ENCODE measurements at regions of chr20 and their contacts with region 1.

Region 1: DNA sequence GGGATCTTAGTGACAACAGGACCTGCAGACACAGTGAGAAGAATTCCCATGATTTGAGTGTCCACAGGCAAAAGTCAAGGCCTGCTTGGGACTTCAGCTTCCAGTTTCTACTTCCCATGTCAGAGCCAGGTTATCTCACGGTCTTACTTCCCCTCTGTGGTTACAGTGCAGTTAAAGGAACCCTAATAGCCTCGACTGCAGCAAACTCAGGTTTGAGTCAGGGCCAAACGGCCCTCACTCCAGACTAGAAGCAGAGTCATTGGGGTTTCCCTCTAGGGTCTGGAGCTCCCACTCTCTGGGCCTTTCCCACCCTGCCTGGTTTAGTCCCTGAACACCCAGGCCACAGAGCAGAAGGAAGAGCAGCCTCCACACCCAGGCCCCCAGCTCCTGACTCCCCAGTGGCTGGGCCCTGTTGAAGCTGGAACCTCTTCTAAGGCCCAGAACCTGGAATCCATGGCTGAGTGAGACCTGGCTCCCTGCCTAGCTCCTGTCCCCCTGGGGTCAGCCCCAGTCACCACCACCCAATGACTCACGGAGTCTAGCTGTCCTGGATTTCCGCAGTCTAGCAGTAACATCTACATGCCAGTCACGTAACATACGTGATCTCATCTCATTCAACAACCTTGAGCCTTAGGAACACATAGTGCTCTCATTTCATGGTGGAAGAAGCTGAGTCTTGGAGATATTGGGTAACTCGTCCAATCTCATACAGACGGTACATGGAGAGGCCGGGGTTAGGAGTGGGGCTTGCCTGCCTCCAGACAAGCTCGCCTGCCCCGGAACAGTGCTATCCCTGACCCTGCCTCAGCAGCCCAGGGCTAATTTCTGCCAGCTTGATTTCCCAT is 9.2 kb upstream of the GHRH start:
- DNase-seq: no peak
- H3K4me3 ChIP-seq: no peak overlapping the region
- H3K27ac ChIP-seq: no peak overlapping the region
- H3K4me1 ChIP-seq: peaks cover 4 to 14% (median 11%) of the 10 kb centered on the region in 4 experiments
- H3K27me3 ChIP-seq: no peaks in the 10 kb centered on the region
- CTCF ChIP-seq: no peak
- EP300 ChIP-seq: no peak
- POLR2A ChIP-seq: no peak
- RAD21 ChIP-seq: no peak

Region 2: DNA sequence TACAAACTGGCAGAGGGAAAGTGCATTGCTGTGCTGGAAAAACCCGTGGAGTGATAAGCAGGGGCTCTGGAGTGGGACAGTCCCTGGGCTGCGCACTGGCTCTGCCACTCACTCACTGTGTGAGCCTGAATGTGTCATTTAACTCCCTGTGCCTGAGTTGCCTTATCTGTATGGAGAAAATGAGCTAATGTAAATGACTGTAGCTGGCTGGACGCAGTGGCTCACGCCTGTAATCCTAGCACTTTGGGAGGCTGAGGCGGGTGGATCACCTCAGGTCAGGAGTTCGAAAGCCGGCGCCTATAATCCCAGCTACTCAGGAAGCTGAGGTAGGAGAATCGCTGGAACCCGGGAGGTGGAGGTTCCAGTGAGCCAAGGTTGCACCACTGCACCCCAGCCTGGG is 110.1 kb before region 1 on chr20:
- CTCF ChIA-PET with region 1: no interaction called
- POLR2A ChIA-PET with region 1: no interaction called
- DNase-seq: no peak
- H3K4me3 ChIP-seq: no peak overlapping the region
- H3K27ac ChIP-seq: no peak overlapping the region
- H3K4me1 ChIP-seq: no peaks in the 10 kb centered on the region
- H3K27me3 ChIP-seq: no peaks in the 10 kb centered on the region
- CTCF ChIP-seq: no peak
- EP300 ChIP-seq: no peak
- POLR2A ChIP-seq: no peak
- RAD21 ChIP-seq: no peak

Region 3: DNA sequence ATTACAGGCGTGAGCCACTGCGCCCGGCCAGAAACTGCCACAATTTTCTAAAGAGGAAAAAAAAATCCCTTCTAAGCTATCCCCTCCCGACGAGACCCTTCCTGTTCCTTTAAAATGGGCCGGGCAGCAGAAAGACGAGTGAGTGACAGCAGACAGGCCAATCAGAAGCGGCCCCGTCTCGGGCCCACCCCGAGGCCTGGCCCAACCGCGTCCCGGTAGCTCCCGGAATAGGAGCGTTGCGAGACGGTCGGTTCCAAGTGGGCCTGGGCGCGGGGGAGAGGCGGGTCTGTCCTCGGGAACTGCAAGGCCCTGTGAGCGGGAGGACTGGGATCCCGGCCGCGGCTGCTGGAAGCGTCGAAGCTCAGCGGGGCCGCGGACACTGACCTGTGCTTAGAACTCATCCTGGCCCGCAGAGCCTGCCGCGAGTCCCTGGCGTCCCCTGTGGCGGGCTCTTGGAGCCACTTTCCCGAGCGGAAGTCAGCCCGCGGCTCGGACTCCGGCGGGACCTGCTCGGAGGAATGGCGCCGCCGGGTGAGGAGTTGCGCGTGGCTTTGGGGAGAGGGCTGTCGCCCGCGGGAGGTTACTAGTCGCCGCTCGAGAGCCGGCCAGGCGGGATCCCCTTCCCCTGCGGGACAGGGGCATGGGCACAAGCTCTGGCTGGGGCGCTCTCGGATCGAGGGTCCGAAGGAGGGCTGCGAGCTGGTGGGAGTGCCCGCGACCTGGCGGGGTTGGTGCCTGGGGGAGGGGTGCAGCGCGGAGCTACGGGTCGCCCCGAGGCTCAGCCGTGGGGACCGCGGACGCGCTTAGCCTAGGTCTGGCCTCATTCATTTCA is 91.7 kb before region 1 on chr20 and contains the starts of genes MROH8 and RPN2:
- CTCF ChIA-PET with region 1: no interaction called
- POLR2A ChIA-PET with region 1: no interaction called
- DNase-seq: peak; percentile 91 to 95
- H3K4me3 ChIP-seq: peak within 1 kb of the TSS; percentile 80 to 97 (median 92)
- H3K27ac ChIP-seq: peak within 1 kb of the TSS; percentile 98
- H3K4me1 ChIP-seq: peaks cover 0 to 8% (median 4%) of the 10 kb centered on the region in 4 experiments; a peak in 5 of 7 replicates
- H3K27me3 ChIP-seq: no peaks in the 10 kb centered on the region
- CTCF ChIP-seq: no peak
- EP300 ChIP-seq: peak in 1 of 2 experiments; percentile 94; a peak in 1 of 3 replicates
- POLR2A ChIP-seq: peak; percentile 66 to 72
- RAD21 ChIP-seq: no peak
- total RNA-seq, gene MROH8: 0.48 and 0.50 TPM in 2 replicates
- total RNA-seq, gene RPN2: 226 and 236 TPM in 2 replicates

Region 4: DNA sequence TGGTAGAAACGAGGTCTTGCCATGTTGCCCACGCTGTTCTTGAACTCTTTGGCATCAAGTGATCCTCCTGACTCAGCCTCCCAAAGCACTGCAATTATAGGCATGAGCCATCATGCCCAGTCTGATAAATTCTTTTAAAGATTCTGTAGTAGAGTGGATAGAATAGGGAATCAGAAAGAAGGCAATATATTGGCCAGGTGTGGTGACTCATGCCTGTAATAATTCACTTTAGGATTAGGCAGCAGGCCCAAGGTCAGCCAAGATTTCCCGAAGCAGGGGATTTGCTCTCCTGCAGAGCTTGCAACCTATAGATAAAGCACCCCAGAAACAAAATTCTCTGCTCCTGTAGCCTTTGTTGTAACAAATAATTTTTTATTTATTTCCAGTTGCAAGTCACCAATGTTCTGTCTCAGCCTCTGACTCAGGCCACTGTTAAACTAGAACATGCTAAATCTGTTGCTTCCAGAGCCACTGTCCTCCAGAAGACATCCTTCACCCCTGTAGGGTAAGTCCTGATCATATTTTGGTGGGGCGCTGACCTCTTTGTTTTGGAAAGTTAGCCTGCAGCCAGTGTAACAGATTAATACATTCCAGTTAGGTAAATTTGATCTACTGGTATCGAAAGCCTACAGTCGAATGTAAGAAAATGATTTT is 61.0 kb before region 1 on chr20:
- CTCF ChIA-PET with region 1: no interaction called
- POLR2A ChIA-PET with region 1: no interaction called
- DNase-seq: no peak
- H3K4me3 ChIP-seq: no peak overlapping the region
- H3K27ac ChIP-seq: no peak overlapping the region
- H3K4me1 ChIP-seq: no peaks in the 10 kb centered on the region
- H3K27me3 ChIP-seq: no peaks in the 10 kb centered on the region
- CTCF ChIP-seq: no peak
- EP300 ChIP-seq: no peak
- POLR2A ChIP-seq: no peak
- RAD21 ChIP-seq: no peak

Region 5: GRCh38 chr20:37251825-37252477 is 18.8 kb before region 1 on chr20:
- CTCF ChIA-PET with region 1: interaction called, 10 read pairs
- POLR2A ChIA-PET with region 1: interaction called, 8 read pairs
- DNase-seq: no peak
- H3K4me3 ChIP-seq: no peak overlapping the region
- H3K27ac ChIP-seq: no peak overlapping the region
- H3K4me1 ChIP-seq: peaks cover 0 to 15% (median 8%) of the 10 kb centered on the region in 4 experiments; a peak in 6 of 7 replicates
- H3K27me3 ChIP-seq: no peaks in the 10 kb centered on the region
- CTCF ChIP-seq: no peak
- EP300 ChIP-seq: no peak
- POLR2A ChIP-seq: no peak
- RAD21 ChIP-seq: no peak

Region 6: GRCh38 chr20:37282556-37282955 is 11.8 kb after region 1 on chr20:
- CTCF ChIA-PET with region 1: interaction called, 91 read pairs
- POLR2A ChIA-PET with region 1: interaction called, 3 read pairs
- DNase-seq: no peak
- H3K4me3 ChIP-seq: no peak overlapping the region
- H3K27ac ChIP-seq: no peak overlapping the region
- H3K4me1 ChIP-seq: peaks cover 0 to 16% (median 0%) of the 10 kb centered on the region in 4 experiments; a peak in 3 of 7 replicates
- H3K27me3 ChIP-seq: 0 out of 7 replicates have a peak, but pooled peaks cover 0 to 4% (median 0%) of the 10 kb centered on the region in 4 experiments
- CTCF ChIP-seq: peak in 2 of 3 experiments; percentile 41 to 56; a peak in 2 of 4 replicates
- EP300 ChIP-seq: no peak
- POLR2A ChIP-seq: no peak
- RAD21 ChIP-seq: peak; percentile 70 to 73

Region 7: DNA sequence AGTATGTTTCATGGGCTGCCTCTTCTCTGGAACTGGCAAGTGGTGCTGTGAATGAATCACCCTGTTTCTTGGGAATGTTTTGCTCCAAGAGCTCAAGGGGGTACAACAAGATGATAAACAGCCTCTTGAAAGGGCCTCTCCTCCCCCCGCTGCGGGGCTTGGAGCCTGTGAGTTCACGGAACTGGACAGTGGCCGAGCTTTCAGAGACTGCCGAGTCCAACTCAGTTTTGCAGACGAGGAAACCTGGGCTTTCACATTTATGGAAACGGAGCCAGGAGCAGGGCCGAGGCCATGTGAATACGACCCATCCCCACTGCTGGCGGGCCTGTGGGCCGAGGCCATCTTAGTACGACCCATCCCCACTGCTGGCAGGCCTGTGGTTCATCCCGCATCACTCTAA is 57.0 kb after region 1 on chr20:
- CTCF ChIA-PET with region 1: interaction called, 10 read pairs
- POLR2A ChIA-PET with region 1: interaction called, 4 read pairs
- DNase-seq: no peak
- H3K4me3 ChIP-seq: no peak overlapping the region
- H3K27ac ChIP-seq: no peak overlapping the region
- H3K4me1 ChIP-seq: 0 out of 7 replicates have a peak, but pooled peaks cover 0 to 3% (median 0%) of the 10 kb centered on the region in 4 experiments
- H3K27me3 ChIP-seq: no peaks in the 10 kb centered on the region
- CTCF ChIP-seq: no peak
- EP300 ChIP-seq: no peak
- POLR2A ChIP-seq: no peak
- RAD21 ChIP-seq: no peak

Region 8: GRCh38 chr20:37392421-37393178 is 121.8 kb after region 1 on chr20:
- CTCF ChIA-PET with region 1: interaction called, 26 read pairs
- POLR2A ChIA-PET with region 1: interaction called, 4 read pairs
- DNase-seq: no peak
- H3K4me3 ChIP-seq: no peak overlapping the region
- H3K27ac ChIP-seq: no peak overlapping the region
- H3K4me1 ChIP-seq: peaks cover 0 to 32% (median 23%) of the 10 kb centered on the region in 4 experiments; a peak in 6 of 7 replicates
- H3K27me3 ChIP-seq: no peaks in the 10 kb centered on the region
- CTCF ChIP-seq: peak; percentile 61 to 81 (median 71)
- EP300 ChIP-seq: no peak
- POLR2A ChIP-seq: no peak
- RAD21 ChIP-seq: peak; percentile 59 to 78

Region 9: GRCh38 chr20:37564388-37565133 is 293.8 kb after region 1 on chr20:
- CTCF ChIA-PET with region 1: interaction called, 10 read pairs
- POLR2A ChIA-PET with region 1: no interaction called
- DNase-seq: peak in 1 of 2 experiments; percentile 93
- H3K4me3 ChIP-seq: no peak overlapping the region
- H3K27ac ChIP-seq: no peak overlapping the region
- H3K4me1 ChIP-seq: peaks cover 2 to 14% (median 7%) of the 10 kb centered on the region in 4 experiments; a peak in 5 of 7 replicates
- H3K27me3 ChIP-seq: peaks cover 0 to 13% (median 5%) of the 10 kb centered on the region in 4 experiments; a peak in 5 of 7 replicates
- CTCF ChIP-seq: peak; percentile 70 to 97 (median 87)
- EP300 ChIP-seq: no peak; a peak in 1 of 3 replicates
- POLR2A ChIP-seq: no peak
- RAD21 ChIP-seq: peak; percentile 98 to 99

Region 10: GRCh38 chr20:37686762-37687477 is 416.1 kb after region 1 on chr20:
- CTCF ChIA-PET with region 1: no interaction called
- POLR2A ChIA-PET with region 1: no interaction called
- DNase-seq: no peak
- H3K4me3 ChIP-seq: no peak overlapping the region
- H3K27ac ChIP-seq: no peak overlapping the region
- H3K4me1 ChIP-seq: no peaks in the 10 kb centered on the region
- H3K27me3 ChIP-seq: no peaks in the 10 kb centered on the region
- CTCF ChIP-seq: no peak
- EP300 ChIP-seq: no peak
- POLR2A ChIP-seq: no peak
- RAD21 ChIP-seq: no peak

Measured in H1 (cell line).